ENCODE measurements at regions of chr20 and their contacts with region 1.

Region 1: GRCh38 chr20:39861381-39861780 is 827.7 kb downstream of the MAFB start:
- DNase-seq: peak in 6 of 7 donors; percentile 22 to 66 (median 36)
- H3K4me3 ChIP-seq: no peak overlapping the region
- H3K27ac ChIP-seq: no peak overlapping the region
- H3K4me1 ChIP-seq: no peaks in the 10 kb centered on the region
- H3K27me3 ChIP-seq: no peaks in the 10 kb centered on the region
- CTCF ChIP-seq: no peak
- POLR2A ChIP-seq: no peak

Region 2: DNA sequence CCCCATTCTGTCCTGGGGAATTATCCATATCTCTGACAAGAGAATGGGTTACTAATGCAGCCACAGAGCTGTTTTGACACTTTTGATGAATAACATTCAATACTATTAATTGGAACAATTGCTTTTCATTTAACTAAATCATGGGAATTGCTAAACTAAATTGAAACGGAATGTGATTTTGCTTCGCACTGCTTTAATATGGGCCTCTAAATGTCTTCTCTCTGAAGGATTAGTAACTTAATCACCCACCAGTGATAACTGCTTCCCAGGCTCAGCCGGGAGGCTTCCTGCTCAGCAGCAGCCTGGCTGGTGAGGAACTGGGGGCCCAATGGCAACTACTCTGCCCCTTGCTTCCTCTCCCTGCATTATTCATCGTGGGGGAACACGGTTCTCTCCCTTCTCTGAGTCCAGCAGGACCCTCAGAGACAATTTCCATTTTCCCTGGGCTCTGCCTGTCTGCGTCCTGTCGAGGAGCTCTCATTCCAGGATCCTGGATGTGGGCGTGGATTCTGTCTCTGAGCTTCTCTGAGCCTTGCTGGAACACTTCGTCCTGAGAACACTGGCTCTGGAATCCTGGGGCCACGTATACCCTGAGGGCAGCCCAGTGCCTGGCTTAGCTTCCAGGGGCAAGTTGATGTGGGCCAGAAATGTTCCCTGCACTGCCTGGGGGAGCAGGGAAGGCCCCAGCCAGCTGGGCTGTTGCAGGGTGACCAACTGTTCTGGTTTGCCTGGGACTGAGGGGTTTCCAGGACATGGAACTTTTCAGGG is 590.4 kb before region 1 on chr20:
- intact Hi-C with region 1: loop called in 1 of 2 experiments (anchors 10 kb)
- DNase-seq: peak in 2 of 7 donors; percentile 34 to 82
- H3K4me3 ChIP-seq: no peak overlapping the region
- H3K27ac ChIP-seq: peak overlapping the region in 2 of 5 donors; percentile 14 to 47
- H3K4me1 ChIP-seq: peaks cover 0 to 9% of the 10 kb centered on the region in 2 donors
- H3K27me3 ChIP-seq: no peaks in the 10 kb centered on the region
- CTCF ChIP-seq: no peak
- POLR2A ChIP-seq: no peak

Region 3: DNA sequence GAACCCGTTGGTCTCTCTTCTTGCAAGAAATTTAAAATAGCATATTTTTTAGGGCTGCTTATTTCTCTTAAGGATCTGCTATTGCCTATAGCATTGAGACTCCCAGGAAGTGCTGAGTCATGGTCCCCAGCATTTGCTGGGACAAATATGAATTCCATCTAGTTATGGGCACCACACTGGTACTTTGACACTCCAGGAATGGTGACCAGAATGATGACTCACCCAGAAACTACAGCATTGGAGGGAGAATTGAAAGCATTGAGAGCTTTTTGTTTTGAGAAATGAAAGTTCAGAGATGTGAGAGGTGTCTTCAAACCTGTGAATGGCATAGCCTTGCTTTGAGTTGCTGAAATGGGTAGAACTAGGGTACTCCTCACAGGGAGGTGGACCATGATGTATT is 199.5 kb before region 1 on chr20:
- intact Hi-C with region 1: no loop called
- DNase-seq: no peak
- H3K4me3 ChIP-seq: no peak overlapping the region
- H3K27ac ChIP-seq: no peak overlapping the region
- H3K4me1 ChIP-seq: no peaks in the 10 kb centered on the region
- H3K27me3 ChIP-seq: no peaks in the 10 kb centered on the region
- CTCF ChIP-seq: no peak
- POLR2A ChIP-seq: no peak

Region 4: GRCh38 chr20:39716796-39717341 is 144.5 kb before region 1 on chr20:
- intact Hi-C with region 1: no loop called
- DNase-seq: peak in 1 of 7 donors; percentile 12
- H3K4me3 ChIP-seq: no peak overlapping the region
- H3K27ac ChIP-seq: no peak overlapping the region
- H3K4me1 ChIP-seq: no peaks in the 10 kb centered on the region
- H3K27me3 ChIP-seq: no peaks in the 10 kb centered on the region
- CTCF ChIP-seq: no peak
- POLR2A ChIP-seq: no peak

Region 5: GRCh38 chr20:39751557-39752137 is 109.7 kb before region 1 on chr20:
- intact Hi-C with region 1: no loop called
- DNase-seq: no peak
- H3K4me3 ChIP-seq: no peak overlapping the region
- H3K27ac ChIP-seq: no peak overlapping the region
- H3K4me1 ChIP-seq: no peaks in the 10 kb centered on the region
- H3K27me3 ChIP-seq: no peaks in the 10 kb centered on the region
- CTCF ChIP-seq: no peak
- POLR2A ChIP-seq: no peak

Region 6: DNA sequence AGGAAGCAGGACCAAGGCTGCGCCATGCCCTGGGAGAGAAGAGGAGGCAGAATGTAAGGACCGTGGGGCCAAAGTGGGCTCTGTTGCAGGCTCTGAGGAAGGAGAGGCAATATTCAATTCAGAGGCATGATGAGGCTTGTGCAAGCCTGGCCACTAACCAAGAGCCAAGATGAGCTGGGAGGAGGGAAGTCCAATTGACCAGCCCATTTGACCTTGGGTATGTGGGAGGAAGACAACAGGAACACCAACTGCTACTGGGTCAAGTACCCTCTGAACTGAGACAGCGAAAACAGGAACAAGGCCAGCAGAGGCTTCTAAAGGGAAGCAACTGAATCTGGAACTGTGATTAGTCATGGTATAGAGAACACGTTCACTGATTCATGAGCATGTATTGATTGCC is 48.1 kb after region 1 on chr20:
- intact Hi-C with region 1: no loop called
- DNase-seq: peak; percentile 43 to 78 (median 52)
- H3K4me3 ChIP-seq: no peak overlapping the region
- H3K27ac ChIP-seq: peak overlapping the region in 1 of 5 donors; percentile 32
- H3K4me1 ChIP-seq: peaks cover 18 to 26% of the 10 kb centered on the region in 2 donors
- H3K27me3 ChIP-seq: no peaks in the 10 kb centered on the region
- CTCF ChIP-seq: no peak
- POLR2A ChIP-seq: no peak